ENCODE measurements at regions of chr20 and their contacts with region 1.

Region 1: DNA sequence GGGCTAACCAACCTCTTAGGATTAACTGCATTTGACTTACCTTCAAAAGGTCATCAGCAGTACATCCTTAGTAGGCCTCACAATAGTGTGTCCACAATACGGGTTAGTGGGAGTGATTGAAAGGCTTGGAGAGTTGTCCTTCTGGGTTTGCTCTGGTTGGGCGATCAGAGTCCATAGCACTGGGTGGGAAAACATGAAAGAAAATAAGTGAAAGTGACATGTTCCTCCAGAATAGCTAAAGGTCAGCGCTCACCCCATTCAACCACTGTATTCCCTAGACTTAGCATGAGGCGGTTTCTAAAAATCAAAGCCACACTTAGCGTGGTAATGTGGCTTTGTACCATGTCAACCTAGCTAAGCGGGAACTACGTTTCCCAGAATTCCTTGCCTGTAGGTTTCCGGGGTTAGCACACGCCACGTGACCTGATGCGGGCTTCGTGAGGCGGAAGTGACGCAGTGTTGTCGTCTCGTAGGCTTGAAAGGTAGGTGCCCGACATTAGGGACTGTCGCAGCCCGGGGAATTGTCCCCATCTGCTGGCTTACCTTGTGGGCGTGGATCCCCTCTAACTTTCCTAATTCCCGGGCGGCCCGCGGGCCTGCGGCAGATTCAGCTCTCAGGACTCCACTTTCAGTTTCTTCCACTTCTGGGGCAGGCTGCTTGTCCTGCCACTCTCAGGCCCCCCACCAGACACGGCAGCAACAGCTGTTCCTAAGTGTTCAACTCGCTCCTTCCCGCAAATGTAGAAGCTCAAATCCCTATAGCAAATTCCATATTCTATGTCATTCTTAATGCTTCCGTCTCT is 19.8 kb upstream of the SCP2D1 start:
- DNase-seq: peak; percentile 82 to 88
- ATAC-seq: peak; percentile 99 to 100
- H3K4me3 ChIP-seq: peak overlapping the region; percentile 82 to 87 (median 85)
- H3K27ac ChIP-seq: peak overlapping the region; percentile 91 to 96 (median 92)
- H3K4me1 ChIP-seq: peaks cover 17 to 18% of the 10 kb centered on the region in 2 donors
- H3K27me3 ChIP-seq: no peaks in the 10 kb centered on the region
- CTCF ChIP-seq: peak in 1 of 5 experiments; percentile 17
- POLR2A ChIP-seq: peak; percentile 58 to 66

Region 2: DNA sequence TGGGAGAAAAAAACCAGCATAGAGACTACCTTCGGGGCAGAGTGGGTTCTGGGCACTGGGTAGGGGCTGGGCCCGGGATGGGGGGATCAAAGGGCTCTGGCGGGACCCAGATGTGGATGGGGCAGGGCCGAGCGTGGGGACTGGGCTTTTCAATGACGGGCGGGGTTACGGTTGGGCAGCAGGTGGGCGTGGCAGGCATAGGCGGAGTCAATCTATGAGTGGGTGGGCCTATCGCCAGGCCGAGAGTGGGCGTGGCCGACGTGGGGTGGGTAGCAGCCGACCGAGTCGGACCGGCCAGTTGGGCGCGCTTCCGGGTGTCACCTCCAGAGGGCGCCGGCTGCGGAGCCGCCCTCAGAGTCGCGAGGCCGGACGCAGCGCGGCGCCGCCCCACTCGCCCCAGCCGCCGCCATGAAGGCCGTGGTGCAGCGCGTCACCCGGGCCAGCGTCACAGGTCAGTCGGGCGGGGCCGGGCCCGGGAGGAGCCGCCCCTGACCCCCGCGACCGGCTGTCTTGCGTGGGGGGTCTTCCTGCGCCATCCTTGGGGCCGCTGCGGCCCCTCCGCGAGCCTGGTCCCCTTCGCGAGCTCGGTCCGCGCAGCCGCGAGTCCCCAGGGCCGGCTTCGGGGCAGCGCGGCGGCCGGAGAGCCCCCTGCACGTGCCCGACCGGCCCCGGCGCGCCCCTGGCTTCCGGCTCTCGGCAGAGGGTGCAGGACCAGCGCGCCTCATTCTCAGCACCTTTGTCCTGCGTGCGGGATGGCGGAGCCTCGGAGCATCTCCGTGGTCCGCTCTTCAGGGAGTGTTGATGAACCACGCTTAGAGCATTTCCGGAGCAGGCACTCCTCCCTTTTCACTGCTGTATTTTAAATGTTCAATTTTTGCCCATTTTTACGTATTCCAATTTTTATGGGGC is 205.9 kb before region 1 on chr20 and contains the start of gene DTD1:
- in situ Hi-C with region 1: loop called in 1 of 4 experiments (anchors 25 kb)
- intact Hi-C with region 1: no loop called
- DNase-seq: peak; percentile 84 to 90
- ATAC-seq: peak; percentile 94 to 95
- H3K4me3 ChIP-seq: peak within 1 kb of the TSS; percentile 63 to 83 (median 73)
- H3K27ac ChIP-seq: peak within 1 kb of the TSS; percentile 45 to 76 (median 68)
- H3K4me1 ChIP-seq: peaks cover 8 to 12% of the 10 kb centered on the region in 2 donors
- H3K27me3 ChIP-seq: no peaks in the 10 kb centered on the region
- CTCF ChIP-seq: peak; percentile 47 to 87 (median 72)
- POLR2A ChIP-seq: peak; percentile 44 to 53
- total RNA-seq, gene DTD1: 18.0 to 33.0 (median 26.5) TPM

Region 3: GRCh38 chr20:18692447-18692846 is 101.4 kb before region 1 on chr20:
- in situ Hi-C with region 1: no loop called
- intact Hi-C with region 1: no loop called
- DNase-seq: no peak
- ATAC-seq: no peak
- H3K4me3 ChIP-seq: no peak overlapping the region
- H3K27ac ChIP-seq: no peak overlapping the region
- H3K4me1 ChIP-seq: no peaks in the 10 kb centered on the region
- H3K27me3 ChIP-seq: no peaks in the 10 kb centered on the region
- CTCF ChIP-seq: no peak
- POLR2A ChIP-seq: no peak

Region 4: GRCh38 chr20:18904624-18905023 is 110.8 kb after region 1 on chr20:
- in situ Hi-C with region 1: no loop called
- intact Hi-C with region 1: no loop called
- DNase-seq: no peak
- ATAC-seq: no peak
- H3K4me3 ChIP-seq: no peak overlapping the region
- H3K27ac ChIP-seq: no peak overlapping the region
- H3K4me1 ChIP-seq: no peaks in the 10 kb centered on the region
- H3K27me3 ChIP-seq: no peaks in the 10 kb centered on the region
- CTCF ChIP-seq: peak in 1 of 5 experiments; percentile 11
- POLR2A ChIP-seq: no peak

Measured in gastrocnemius medialis (tissue), 4 donors.